ENCODE measurements at regions of chr3 and their contacts with region 1.

Region 1: DNA sequence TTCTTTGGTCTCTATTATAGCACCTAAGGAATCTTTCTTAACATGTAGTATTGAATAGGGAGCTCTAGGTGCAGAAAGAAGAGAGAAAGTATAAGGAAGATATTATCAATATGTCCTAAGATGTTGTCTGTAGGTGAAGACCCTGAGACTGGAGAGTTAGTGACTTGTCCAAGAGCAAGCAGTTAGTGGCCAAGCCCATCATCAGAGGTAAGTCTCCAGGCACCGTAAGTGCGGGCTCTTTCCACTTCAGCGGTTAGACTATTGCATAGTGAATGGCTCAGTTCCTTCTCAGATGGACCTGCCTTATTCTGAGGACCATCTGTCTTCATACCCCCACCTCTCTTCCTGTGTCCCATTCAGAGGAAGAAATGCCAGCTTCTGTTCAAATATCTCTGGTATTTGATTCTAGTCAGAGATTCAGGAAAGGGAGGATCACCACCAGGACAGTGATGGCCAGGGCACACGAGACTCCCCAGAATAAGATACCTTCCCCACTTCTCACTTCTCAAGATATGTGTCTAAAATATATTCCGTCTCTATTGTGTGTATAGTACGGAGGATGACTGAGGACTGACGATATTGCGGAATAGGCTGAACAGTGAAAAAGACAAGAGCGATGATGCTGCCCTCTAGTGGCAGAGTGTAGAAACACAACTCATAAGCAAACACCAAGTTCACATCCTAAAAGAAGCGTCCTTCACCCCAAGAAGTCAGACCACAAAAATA is 19.1 kb upstream of the ADGRG7 start:
- DNase-seq: peak in 4 of 10 donors; percentile 40 to 61 (median 52)
- H3K4me3 ChIP-seq: peak overlapping the region in 34 of 59 donors; percentile 7 to 47 (median 29)
- H3K27ac ChIP-seq: no peak overlapping the region
- H3K27me3 ChIP-seq: peaks cover 0 to 2% (median 0%) of the 10 kb centered on the region in 45 donors
- CTCF ChIP-seq: peak; percentile 85 to 98 (median 94)

Region 2: DNA sequence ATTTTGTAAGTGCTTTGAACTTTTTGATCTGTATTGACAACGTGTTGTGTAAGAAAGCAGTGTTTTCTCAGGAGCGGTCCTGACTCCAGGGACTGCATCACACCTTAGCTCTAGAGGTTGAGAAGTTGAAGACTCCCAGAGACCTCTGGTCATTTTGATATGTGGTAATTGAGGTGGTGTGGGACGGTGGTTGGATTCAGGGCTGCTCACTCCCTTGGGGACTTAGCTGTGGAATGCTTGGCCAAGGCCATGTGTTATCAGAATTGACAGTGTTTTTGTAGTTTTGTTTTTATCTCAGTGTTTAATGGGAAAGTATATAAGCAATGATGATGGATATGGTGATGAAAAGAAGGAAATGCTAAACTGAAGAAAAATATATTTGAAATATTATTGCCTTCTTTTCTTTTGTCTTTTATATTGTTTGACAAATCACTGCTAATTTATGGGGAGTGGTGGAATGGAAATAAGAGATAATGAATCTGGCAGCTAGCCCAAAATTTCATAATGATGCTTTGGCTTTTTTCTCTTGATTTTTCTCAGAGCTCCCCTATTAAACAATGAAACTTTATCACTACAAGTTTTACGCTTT is 756.6 kb before region 1 on chr3:
- intact Hi-C with region 1: loop called in 1 of 2 experiments (anchors 5 kb)
- DNase-seq: no peak
- H3K4me3 ChIP-seq: no peak overlapping the region
- H3K27ac ChIP-seq: no peak overlapping the region
- H3K27me3 ChIP-seq: no peaks in the 10 kb centered on the region
- CTCF ChIP-seq: no peak

Region 3: DNA sequence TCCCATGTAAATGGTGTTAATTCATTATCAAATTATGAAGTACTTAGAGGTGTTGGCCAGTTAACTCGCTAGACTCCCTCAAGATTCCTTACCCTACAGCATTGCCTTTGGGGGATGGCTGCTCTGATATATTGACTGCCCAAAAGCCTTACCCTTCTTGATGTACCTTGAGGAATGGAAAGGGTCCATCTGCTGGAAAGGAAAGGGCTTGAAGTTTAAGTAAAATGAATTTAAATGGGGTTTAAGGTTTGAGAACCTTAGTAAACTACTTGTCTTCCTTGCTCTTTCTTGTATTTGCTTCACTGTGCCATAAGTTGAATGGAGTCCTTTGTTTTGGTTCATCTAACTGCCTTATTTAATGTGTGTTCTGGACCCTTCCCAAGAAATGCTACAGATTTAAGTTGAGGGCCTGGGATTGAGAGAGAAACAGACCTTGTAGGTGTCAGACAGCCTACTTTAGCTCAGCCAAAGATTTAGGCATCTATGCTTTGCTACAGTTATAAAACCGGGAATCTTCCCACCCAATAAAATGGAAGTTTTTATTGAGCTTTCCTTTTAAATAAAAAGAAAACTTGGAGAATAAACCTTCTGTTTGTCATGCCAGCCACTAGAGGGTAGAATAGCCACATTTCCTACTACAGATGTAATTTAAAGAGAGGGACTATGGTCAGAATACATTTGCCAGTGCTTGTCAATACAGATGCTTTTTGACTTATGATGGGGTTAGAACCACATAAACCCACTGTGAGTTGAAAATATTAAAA is 747.3 kb before region 1 on chr3:
- intact Hi-C with region 1: loop called (anchors 5 kb)
- DNase-seq: no peak
- H3K4me3 ChIP-seq: no peak overlapping the region
- H3K27ac ChIP-seq: peak overlapping the region in 34 of 59 donors; percentile 0 to 80 (median 54)
- H3K27me3 ChIP-seq: no peaks in the 10 kb centered on the region
- CTCF ChIP-seq: peak; percentile 50 to 87 (median 70)

Region 4: GRCh38 chr3:100316641-100317069 is 273.6 kb before region 1 on chr3:
- intact Hi-C with region 1: loop called in 1 of 2 experiments (anchors 2 kb)
- DNase-seq: no peak
- H3K4me3 ChIP-seq: peak overlapping the region in 7 of 59 donors; percentile 6 to 33 (median 19)
- H3K27ac ChIP-seq: peak overlapping the region in 1 of 59 donors; percentile 2
- H3K27me3 ChIP-seq: no peaks in the 10 kb centered on the region
- CTCF ChIP-seq: peak; percentile 38 to 77 (median 65)

Region 5: GRCh38 chr3:100463002-100463401 is 127.3 kb before region 1 on chr3:
- intact Hi-C with region 1: loop called (anchors 1 to 10 kb)
- DNase-seq: peak in 1 of 10 donors; percentile 12
- H3K4me3 ChIP-seq: no peak overlapping the region
- H3K27ac ChIP-seq: no peak overlapping the region
- H3K27me3 ChIP-seq: no peaks in the 10 kb centered on the region
- CTCF ChIP-seq: peak; percentile 38 to 87 (median 71)